ENCODE measurements at regions of chr14 and their contacts with region 1.

Region 1: GRCh38 chr14:106831322-106831720 is 1304.9 kb downstream of the TMEM121 start:
- DNase-seq: no peak
- ATAC-seq: peak; percentile 88
- H3K4me3 ChIP-seq: no peak overlapping the region
- H3K27ac ChIP-seq: no peak overlapping the region
- H3K4me1 ChIP-seq: no peaks in the 10 kb centered on the region; the same call in 1 of the 2 replicates
- H3K27me3 ChIP-seq: no peaks in the 10 kb centered on the region
- CTCF ChIP-seq: peak; percentile 93 to 99 (median 96)
- EP300 ChIP-seq: no peak
- POLR2A ChIP-seq: no peak
- RAD21 ChIP-seq: peak; percentile 43

Region 2: DNA sequence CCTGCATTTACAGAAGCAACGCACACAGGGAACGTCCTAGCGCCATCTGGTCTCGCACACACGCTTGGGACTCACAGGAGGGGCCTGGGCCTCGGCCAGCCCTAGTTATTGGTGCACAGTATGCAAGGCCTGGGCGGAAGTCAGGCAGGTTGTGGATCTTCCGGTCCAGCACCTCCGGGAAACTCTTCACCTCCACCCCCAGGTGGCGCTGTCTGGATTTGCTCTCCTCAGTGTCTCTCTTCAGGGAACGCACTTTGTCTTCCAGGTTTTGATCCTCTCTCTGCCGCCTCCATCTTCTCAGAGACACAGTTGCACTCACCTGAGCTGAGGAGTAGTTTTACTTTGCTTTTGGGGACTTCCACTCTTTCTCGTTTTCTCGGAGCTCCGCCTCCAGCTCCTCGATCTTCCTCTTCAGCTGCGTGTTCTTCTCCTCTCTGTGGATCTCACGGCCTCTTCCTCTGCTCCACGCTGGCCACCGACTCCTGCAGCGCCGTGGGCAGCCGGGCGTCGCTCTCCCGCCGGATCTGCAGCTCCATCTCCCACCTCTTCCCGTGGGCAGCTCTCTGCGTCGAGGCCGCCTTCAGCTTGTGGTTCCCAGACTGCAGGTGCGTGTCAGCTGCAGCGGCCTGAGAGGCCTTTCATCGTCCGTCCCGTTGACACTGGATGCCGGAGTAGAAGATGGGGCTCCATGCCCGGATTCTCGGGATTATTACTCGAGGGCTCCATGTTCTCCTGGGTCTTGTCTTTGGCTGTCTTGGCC is 371.2 kb before region 1 on chr14:
- CTCF ChIA-PET with region 1: no interaction called
- POLR2A ChIA-PET with region 1: no interaction called
- RAD21 ChIA-PET with region 1: no interaction called
- SMC1A ChIA-PET with region 1: no interaction called
- in situ Hi-C with region 1: no loop called
- intact Hi-C with region 1: no loop called
- DNase-seq: no peak
- ATAC-seq: peak; percentile 91
- H3K4me3 ChIP-seq: no peak overlapping the region
- H3K27ac ChIP-seq: no peak overlapping the region
- H3K4me1 ChIP-seq: no peaks in the 10 kb centered on the region
- H3K27me3 ChIP-seq: no peaks in the 10 kb centered on the region
- CTCF ChIP-seq: peak; percentile 41 to 56 (median 56)
- EP300 ChIP-seq: no peak
- POLR2A ChIP-seq: no peak
- RAD21 ChIP-seq: peak; percentile 45

Region 3: DNA sequence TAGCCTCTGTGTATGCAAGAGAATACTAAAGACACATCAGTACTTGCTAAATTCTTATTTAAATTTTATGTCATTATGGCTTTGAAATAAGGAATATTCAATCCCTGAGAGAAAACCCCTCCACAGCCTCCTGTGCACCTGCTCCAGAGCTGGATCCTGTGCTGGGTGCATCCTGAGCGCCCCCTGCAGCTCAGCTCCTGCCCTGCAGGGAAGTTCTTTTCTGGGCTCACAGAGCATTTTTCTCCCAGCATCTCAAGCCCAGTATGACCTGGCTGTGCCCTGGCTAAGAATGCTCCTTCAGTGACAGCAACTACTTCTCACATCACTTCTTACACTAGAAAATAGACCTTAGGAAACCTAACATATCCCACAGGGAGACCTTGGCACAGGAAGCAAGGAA is 93.2 kb before region 1 on chr14:
- CTCF ChIA-PET with region 1: no interaction called
- POLR2A ChIA-PET with region 1: no interaction called
- RAD21 ChIA-PET with region 1: no interaction called
- SMC1A ChIA-PET with region 1: no interaction called
- in situ Hi-C with region 1: no loop called
- intact Hi-C with region 1: no loop called
- DNase-seq: no peak
- ATAC-seq: no peak
- H3K4me3 ChIP-seq: no peak overlapping the region
- H3K27ac ChIP-seq: no peak overlapping the region
- H3K4me1 ChIP-seq: no peaks in the 10 kb centered on the region
- H3K27me3 ChIP-seq: no peaks in the 10 kb centered on the region
- CTCF ChIP-seq: no peak
- EP300 ChIP-seq: no peak
- POLR2A ChIP-seq: no peak
- RAD21 ChIP-seq: no peak

Region 4: GRCh38 chr14:106766145-106766544 is 65.2 kb before region 1 on chr14:
- CTCF ChIA-PET with region 1: interaction called, 11 read pairs
- POLR2A ChIA-PET with region 1: no interaction called
- RAD21 ChIA-PET with region 1: interaction called, 4 read pairs
- SMC1A ChIA-PET with region 1: no interaction called
- in situ Hi-C with region 1: no loop called
- intact Hi-C with region 1: no loop called
- DNase-seq: no peak
- ATAC-seq: no peak
- H3K4me3 ChIP-seq: no peak overlapping the region
- H3K27ac ChIP-seq: no peak overlapping the region
- H3K4me1 ChIP-seq: peaks cover 14% of the 10 kb centered on the region
- H3K27me3 ChIP-seq: no peaks in the 10 kb centered on the region
- CTCF ChIP-seq: no peak
- EP300 ChIP-seq: no peak
- POLR2A ChIP-seq: no peak
- RAD21 ChIP-seq: no peak

Region 5: DNA sequence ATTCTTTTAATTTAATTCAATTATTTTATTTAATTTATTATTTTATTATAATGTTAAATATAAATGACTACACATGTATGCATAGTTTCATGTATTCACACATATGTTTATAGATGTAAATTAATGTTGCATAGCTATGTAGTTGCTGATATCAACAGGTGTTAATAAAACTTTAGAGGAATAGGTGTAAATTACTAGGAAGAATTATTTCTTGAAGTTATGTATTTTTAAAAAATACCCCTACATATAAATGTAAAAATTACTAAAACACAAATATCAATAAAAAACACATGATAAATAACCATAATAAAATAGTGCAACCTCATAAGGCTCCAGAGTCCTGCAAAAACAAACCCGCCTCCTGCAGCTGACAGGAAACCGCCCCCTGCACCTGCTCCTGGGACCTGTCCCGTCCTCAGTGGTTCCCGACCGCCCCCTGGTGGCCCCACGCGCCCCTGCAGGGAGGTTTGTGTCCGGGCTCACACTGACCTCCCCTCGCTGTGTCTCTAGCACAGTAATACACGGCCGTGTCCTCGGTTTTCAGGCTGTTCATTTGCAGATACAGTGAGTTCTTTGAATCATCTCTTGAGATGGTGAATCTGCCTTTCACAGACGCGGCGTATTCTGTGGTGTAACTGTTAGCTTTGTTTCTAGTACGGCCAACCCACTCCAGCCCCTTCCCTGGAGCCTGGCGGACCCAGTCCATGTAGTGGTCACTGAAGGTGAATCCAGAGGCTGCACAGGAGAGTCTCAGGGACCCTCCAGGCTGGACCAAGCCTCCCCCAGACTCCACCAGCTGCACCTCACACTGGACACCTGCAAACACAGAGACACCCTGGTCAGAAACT is 40.9 kb before region 1 on chr14:
- CTCF ChIA-PET with region 1: interaction called, 61 read pairs
- POLR2A ChIA-PET with region 1: no interaction called
- RAD21 ChIA-PET with region 1: interaction called, 10 read pairs
- SMC1A ChIA-PET with region 1: interaction called, 7 read pairs
- in situ Hi-C with region 1: no loop called
- intact Hi-C with region 1: loop called (anchors 5 kb)
- DNase-seq: no peak
- ATAC-seq: peak; percentile 92
- H3K4me3 ChIP-seq: no peak overlapping the region
- H3K27ac ChIP-seq: no peak overlapping the region
- H3K4me1 ChIP-seq: no peaks in the 10 kb centered on the region
- H3K27me3 ChIP-seq: no peaks in the 10 kb centered on the region
- CTCF ChIP-seq: peak; percentile 72 to 95 (median 93)
- EP300 ChIP-seq: no peak
- POLR2A ChIP-seq: no peak
- RAD21 ChIP-seq: peak; percentile 82

Region 6: GRCh38 chr14:106812788-106813476 is 18.4 kb before region 1 on chr14:
- CTCF ChIA-PET with region 1: interaction called, 31 read pairs
- POLR2A ChIA-PET with region 1: no interaction called
- RAD21 ChIA-PET with region 1: interaction called, 6 read pairs
- SMC1A ChIA-PET with region 1: interaction called, 4 read pairs
- in situ Hi-C with region 1: no loop called
- intact Hi-C with region 1: loop called (anchors 2 kb)
- DNase-seq: no peak
- ATAC-seq: no peak
- H3K4me3 ChIP-seq: no peak overlapping the region
- H3K27ac ChIP-seq: no peak overlapping the region
- H3K4me1 ChIP-seq: peaks cover 8% of the 10 kb centered on the region
- H3K27me3 ChIP-seq: no peaks in the 10 kb centered on the region; a peak in 1 of 4 replicates
- CTCF ChIP-seq: no peak
- EP300 ChIP-seq: no peak
- POLR2A ChIP-seq: no peak
- RAD21 ChIP-seq: no peak

Region 7: GRCh38 chr14:106850913-106851825 is 19.8 kb after region 1 on chr14:
- CTCF ChIA-PET with region 1: interaction called, 435 read pairs
- POLR2A ChIA-PET with region 1: interaction called, 3 read pairs
- RAD21 ChIA-PET with region 1: interaction called, 19 read pairs
- SMC1A ChIA-PET with region 1: interaction called, 12 read pairs
- in situ Hi-C with region 1: no loop called
- intact Hi-C with region 1: no loop called
- DNase-seq: no peak
- ATAC-seq: peak; percentile 75
- H3K4me3 ChIP-seq: peak overlapping the region; percentile 71
- H3K27ac ChIP-seq: peak overlapping the region; percentile 7
- H3K4me1 ChIP-seq: peaks cover 29% of the 10 kb centered on the region
- H3K27me3 ChIP-seq: no peaks in the 10 kb centered on the region
- CTCF ChIP-seq: no peak
- EP300 ChIP-seq: no peak; a peak in 1 of 4 replicates
- POLR2A ChIP-seq: peak; percentile 65
- RAD21 ChIP-seq: no peak

Measured in GM12878 (cell line).